ENCODE measurements at regions of chr15 and their contacts with region 1.

Region 1: DNA sequence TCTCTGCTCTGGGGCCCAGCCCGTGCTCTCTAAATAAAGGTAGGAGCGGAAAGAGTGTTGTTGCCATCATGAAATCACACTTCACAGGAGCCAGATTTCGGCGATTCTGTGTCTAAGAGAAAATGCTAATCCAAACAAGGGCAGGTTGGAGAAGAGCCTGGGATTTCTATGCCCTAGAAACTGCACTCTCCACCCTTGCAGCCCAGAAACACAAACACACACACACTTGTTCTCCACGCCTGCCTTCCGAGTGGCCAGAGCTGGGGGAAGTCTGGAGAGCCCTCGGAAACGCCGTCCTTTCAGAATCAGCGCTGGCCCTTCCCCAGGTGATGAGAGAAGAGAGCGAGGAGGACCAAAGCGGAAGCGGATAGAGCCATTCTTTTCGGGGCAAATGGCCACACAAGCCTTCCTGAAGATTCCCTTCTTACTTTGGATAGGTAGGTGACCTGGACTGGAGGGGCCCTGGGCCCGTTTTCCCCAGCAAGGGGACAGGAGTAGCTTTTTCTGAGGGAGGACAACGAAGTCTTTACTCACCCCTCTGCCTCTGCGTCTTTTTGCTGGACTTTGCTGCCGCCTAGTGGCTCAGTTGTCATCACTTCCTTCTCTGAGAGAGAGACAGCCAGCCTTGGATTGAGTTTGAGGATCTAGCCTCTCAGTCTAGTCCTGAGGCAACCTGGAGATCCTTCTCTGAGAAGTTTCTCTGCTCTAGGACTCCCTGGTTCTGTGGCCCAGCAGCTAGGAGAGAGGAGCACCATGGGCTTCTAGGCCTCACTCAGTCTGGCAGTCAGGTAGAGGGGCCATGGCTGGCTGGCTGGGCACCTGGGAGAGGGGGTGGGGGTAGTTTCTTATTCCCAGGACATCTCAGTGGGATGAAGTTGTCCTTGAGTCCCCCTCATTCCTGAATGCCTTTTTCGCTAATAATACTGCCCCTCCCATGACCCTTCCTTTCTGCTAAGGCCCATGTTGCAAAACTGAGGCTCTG is 37.7 kb downstream of the SENP8 start:
- DNase-seq: peak; percentile 48
- H3K4me3 ChIP-seq: peak overlapping the region; percentile 60
- H3K27ac ChIP-seq: peak overlapping the region; percentile 21
- H3K27me3 ChIP-seq: peaks cover under 1% of the 10 kb centered on the region
- CTCF ChIP-seq: peak; percentile 92

Region 2: DNA sequence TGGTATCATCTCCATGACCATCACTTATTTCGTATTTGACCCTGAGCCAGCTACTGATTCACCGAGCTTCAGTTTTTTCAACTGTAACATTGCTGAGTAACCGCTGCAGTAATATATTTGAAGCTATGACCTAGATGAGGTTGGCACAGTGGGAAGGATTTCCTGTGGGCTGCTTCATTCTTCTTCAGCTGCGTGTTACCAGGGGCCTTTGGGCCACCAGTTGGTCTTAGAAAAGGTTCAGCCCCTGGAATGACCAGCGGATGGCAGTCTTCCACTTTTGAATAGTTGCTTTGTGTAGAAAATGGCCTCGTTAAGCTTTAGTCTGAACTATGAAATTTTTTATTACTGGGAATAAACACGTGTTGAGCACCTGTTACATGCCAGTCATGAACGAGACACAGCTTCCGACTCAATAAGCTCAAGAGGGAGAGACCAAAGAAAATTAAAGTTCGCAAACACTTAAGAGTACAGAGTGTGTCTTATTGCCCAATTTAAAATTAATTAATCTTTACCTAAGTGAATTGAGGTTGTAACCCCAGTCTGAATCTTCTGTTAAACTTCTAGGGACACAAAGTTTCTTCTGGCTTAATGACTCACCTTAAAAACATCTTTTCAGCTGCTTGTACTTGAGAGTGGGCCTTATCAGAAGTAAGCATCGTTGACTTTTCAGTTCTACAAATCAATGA is 403.2 kb before region 1 on chr15:
- CTCF ChIA-PET with region 1: interaction called, 13 read pairs
- POLR2A ChIA-PET with region 1: no interaction called
- DNase-seq: peak; percentile 46
- H3K4me3 ChIP-seq: no peak overlapping the region
- H3K27ac ChIP-seq: peak overlapping the region; percentile 22
- H3K27me3 ChIP-seq: no peaks in the 10 kb centered on the region
- CTCF ChIP-seq: peak; percentile 47

Region 3: GRCh38 chr15:71780115-71780976 is 375.6 kb before region 1 on chr15:
- CTCF ChIA-PET with region 1: interaction called, 11 read pairs
- POLR2A ChIA-PET with region 1: interaction called, 5 read pairs
- DNase-seq: no peak
- H3K4me3 ChIP-seq: no peak overlapping the region
- H3K27ac ChIP-seq: no peak overlapping the region
- H3K27me3 ChIP-seq: no peaks in the 10 kb centered on the region
- CTCF ChIP-seq: peak; percentile 82